ENCODE measurements at regions of chr22 and their contacts with region 1.

Region 1: DNA sequence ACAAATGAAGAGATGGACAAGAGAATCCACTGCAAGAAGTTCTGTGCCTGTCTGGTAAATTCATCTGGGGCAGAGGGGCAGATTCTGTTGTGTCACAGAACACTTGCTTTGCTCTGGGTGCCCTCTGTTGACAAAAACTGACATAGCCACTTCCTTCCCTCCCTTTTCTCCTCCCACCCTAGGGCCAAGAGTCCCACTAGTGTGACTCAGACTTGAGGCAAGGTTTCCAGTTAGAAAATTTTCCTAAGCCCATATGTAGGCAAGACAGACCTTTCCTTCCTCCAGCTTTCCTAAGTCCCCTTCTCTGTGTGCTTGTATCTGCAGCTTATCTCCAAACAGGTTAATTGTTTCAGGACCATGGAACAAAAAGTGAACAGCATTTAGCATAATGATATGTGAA is 106.8 kb downstream of the RBFOX2 start:
- DNase-seq: peak; percentile 13
- ATAC-seq: peak; percentile 87
- H3K4me3 ChIP-seq: no peak overlapping the region
- H3K27ac ChIP-seq: no peak overlapping the region
- H3K4me1 ChIP-seq: no peaks in the 10 kb centered on the region
- H3K27me3 ChIP-seq: no peaks in the 10 kb centered on the region
- CTCF ChIP-seq: peak; percentile 46 to 75 (median 60); a peak in 5 of 6 replicates
- EP300 ChIP-seq: no peak
- POLR2A ChIP-seq: no peak
- RAD21 ChIP-seq: peak; percentile 77

Region 2: DNA sequence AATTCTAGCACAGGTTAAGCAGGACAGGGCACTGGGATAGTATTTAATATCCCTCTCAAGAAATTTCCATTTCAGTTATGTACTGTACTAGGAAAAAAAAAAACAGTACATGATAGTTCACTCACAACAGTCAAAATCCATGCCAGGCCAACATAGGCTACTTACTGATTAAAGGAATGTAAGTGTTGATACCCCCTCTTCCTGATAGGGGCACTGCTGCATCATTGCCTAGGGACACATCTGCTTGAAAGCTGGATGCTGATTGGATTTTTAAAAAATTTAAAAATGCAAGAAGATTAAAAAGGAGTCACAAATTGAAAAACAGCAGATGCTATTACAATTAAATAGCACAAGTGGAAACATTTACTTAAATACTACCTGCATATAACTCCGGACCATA is 160.7 kb before region 1 on chr22:
- CTCF ChIA-PET with region 1: no interaction called
- POLR2A ChIA-PET with region 1: no interaction called
- RAD21 ChIA-PET with region 1: no interaction called
- SMC1A ChIA-PET with region 1: no interaction called
- in situ Hi-C with region 1: no loop called
- intact Hi-C with region 1: loop called (anchors 10 kb)
- DNase-seq: no peak
- ATAC-seq: no peak
- H3K4me3 ChIP-seq: no peak overlapping the region
- H3K27ac ChIP-seq: no peak overlapping the region
- H3K4me1 ChIP-seq: no peaks in the 10 kb centered on the region
- H3K27me3 ChIP-seq: peaks cover 0 to 3% of the 10 kb centered on the region in 2 experiments; a peak in 1 of 4 replicates
- CTCF ChIP-seq: peak in 2 of 3 experiments; percentile 1 to 8; a peak in 1 of 6 replicates
- EP300 ChIP-seq: no peak
- POLR2A ChIP-seq: no peak
- RAD21 ChIP-seq: 0 out of 2 replicates have a peak, but pooled peaks have one; percentile 8

Region 3: GRCh38 chr22:35866651-35867050 is 55.1 kb before region 1 on chr22:
- CTCF ChIA-PET with region 1: no interaction called
- POLR2A ChIA-PET with region 1: no interaction called
- RAD21 ChIA-PET with region 1: no interaction called
- SMC1A ChIA-PET with region 1: no interaction called
- in situ Hi-C with region 1: no loop called
- intact Hi-C with region 1: no loop called
- DNase-seq: no peak
- ATAC-seq: no peak
- H3K4me3 ChIP-seq: no peak overlapping the region
- H3K27ac ChIP-seq: no peak overlapping the region
- H3K4me1 ChIP-seq: no peaks in the 10 kb centered on the region
- H3K27me3 ChIP-seq: peaks cover 0 to 6% of the 10 kb centered on the region in 2 experiments; a peak in 1 of 4 replicates
- CTCF ChIP-seq: no peak
- EP300 ChIP-seq: no peak
- POLR2A ChIP-seq: no peak
- RAD21 ChIP-seq: no peak